Endothelial cell of umbilical vein (primary cell): ENCODE measurements at regions of chr1 and their contacts with region 1.

Region 1: GRCh38 chr1:98794196-98794886 is 132.8 kb downstream of the SNX7 start:
- DNase-seq: peak; percentile 80
- H3K4me3 ChIP-seq: no peak overlapping the region
- H3K27ac ChIP-seq: no peak overlapping the region
- H3K4me1 ChIP-seq: no peaks in the 10 kb centered on the region
- H3K27me3 ChIP-seq: peaks cover 13 to 18% of the 10 kb centered on the region in 2 experiments
- CTCF ChIP-seq: peak; percentile 62 to 69
- POLR2A ChIP-seq: no peak

Region 2: DNA sequence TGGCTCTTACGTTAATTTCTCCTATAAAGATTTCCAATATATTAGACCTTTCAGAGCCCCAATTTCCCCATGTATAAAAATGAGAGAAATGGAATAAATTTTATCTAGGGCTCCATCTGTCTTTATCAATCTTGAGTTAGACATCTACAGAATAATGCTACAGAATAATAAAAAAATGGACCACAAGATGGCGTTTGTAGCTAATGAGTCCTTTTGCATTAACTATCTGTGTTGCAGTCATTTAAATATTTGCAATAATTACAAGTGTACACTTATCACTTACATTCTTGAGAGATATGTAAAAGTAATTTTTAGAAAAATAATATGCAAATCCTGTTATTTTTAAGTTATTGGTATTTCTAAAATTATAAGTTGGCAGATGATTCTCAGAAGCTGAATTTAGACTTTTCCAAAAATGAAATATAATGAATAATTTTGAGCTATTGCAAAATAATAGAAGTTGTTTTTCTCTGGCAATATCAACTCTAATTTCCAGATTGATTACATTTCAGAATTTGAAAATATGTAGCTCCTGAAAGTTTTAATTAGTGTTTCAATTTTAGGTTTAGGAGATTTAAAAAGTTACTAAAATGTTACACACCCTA is 45.1 kb before region 1 on chr1:
- CTCF ChIA-PET with region 1: interaction called, 10 read pairs
- POLR2A ChIA-PET with region 1: no interaction called
- dilution Hi-C with region 1: no loop called
- intact Hi-C with region 1: no loop called
- DNase-seq: peak; percentile 32
- H3K4me3 ChIP-seq: no peak overlapping the region
- H3K27ac ChIP-seq: no peak overlapping the region
- H3K4me1 ChIP-seq: no peaks in the 10 kb centered on the region
- H3K27me3 ChIP-seq: no peaks in the 10 kb centered on the region
- CTCF ChIP-seq: peak; percentile 10 to 22
- POLR2A ChIP-seq: no peak

Region 3: GRCh38 chr1:98761219-98761865 is 33.0 kb before region 1 on chr1:
- CTCF ChIA-PET with region 1: interaction called, 10 read pairs
- POLR2A ChIA-PET with region 1: no interaction called
- dilution Hi-C with region 1: no loop called
- intact Hi-C with region 1: no loop called
- DNase-seq: no peak
- H3K4me3 ChIP-seq: no peak overlapping the region
- H3K27ac ChIP-seq: no peak overlapping the region
- H3K4me1 ChIP-seq: no peaks in the 10 kb centered on the region
- H3K27me3 ChIP-seq: no peaks in the 10 kb centered on the region
- CTCF ChIP-seq: no peak
- POLR2A ChIP-seq: no peak

Region 4: GRCh38 chr1:99004860-99005442 is 210.6 kb after region 1 on chr1 and contains the start of gene PLPPR5:
- CTCF ChIA-PET with region 1: interaction called, 4 read pairs
- POLR2A ChIA-PET with region 1: no interaction called
- dilution Hi-C with region 1: no loop called
- intact Hi-C with region 1: loop called (anchors 1 kb)
- DNase-seq: peak; percentile 12
- H3K4me3 ChIP-seq: peak within 1 kb of the TSS; percentile 4 to 40 (median 5)
- H3K27ac ChIP-seq: no peak within 1 kb of the TSS
- H3K4me1 ChIP-seq: peaks cover 6% of the 10 kb centered on the region
- H3K27me3 ChIP-seq: peaks cover 43 to 79% of the 10 kb centered on the region in 2 experiments
- CTCF ChIP-seq: peak in 1 of 2 donors; percentile 31
- POLR2A ChIP-seq: no peak
- total RNA-seq, gene PLPPR5: not detected in 2 replicates

Region 5: GRCh38 chr1:99180343-99180808 is 386.0 kb after region 1 on chr1:
- CTCF ChIA-PET with region 1: interaction called, 14 read pairs
- POLR2A ChIA-PET with region 1: no interaction called
- dilution Hi-C with region 1: no loop called
- intact Hi-C with region 1: loop called (anchors 1 kb)
- DNase-seq: peak; percentile 90
- H3K4me3 ChIP-seq: no peak overlapping the region
- H3K27ac ChIP-seq: no peak overlapping the region
- H3K4me1 ChIP-seq: no peaks in the 10 kb centered on the region
- H3K27me3 ChIP-seq: no peaks in the 10 kb centered on the region
- CTCF ChIP-seq: peak; percentile 57 to 68
- POLR2A ChIP-seq: no peak

Region 6: DNA sequence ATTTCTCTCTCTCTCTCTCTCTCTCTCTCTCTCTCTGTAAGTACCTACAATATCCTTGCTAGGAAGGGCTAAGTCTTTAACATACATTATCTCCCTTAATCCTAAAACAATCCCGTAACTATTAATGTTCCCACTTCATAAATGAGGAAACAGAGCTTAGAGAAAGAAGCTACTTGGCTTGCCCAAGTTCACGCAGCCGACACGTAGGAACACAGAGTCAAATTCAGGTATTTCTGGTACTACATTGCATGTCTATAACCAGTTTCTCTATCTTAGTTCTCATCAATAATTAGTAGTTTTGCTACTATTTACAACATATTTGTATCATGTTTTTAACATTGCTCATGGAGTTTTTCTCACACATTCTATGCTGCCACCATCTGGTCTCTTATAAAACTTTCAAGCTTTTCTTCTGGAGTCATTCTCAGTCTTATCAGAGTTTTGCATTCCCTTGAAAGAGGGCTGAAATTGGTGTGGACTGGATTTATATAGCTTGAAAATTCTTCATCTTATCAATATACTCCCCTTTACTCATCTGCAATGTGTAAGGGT is 732.7 kb after region 1 on chr1:
- CTCF ChIA-PET with region 1: interaction called, 14 read pairs
- POLR2A ChIA-PET with region 1: no interaction called
- dilution Hi-C with region 1: no loop called
- intact Hi-C with region 1: no loop called
- DNase-seq: peak; percentile 57
- H3K4me3 ChIP-seq: no peak overlapping the region
- H3K27ac ChIP-seq: no peak overlapping the region
- H3K4me1 ChIP-seq: no peaks in the 10 kb centered on the region
- H3K27me3 ChIP-seq: no peaks in the 10 kb centered on the region
- CTCF ChIP-seq: peak in 1 of 2 donors; percentile 21
- POLR2A ChIP-seq: no peak

Region 7: GRCh38 chr1:99737016-99737415 is 942.7 kb after region 1 on chr1:
- CTCF ChIA-PET with region 1: interaction called, 12 read pairs
- POLR2A ChIA-PET with region 1: no interaction called
- dilution Hi-C with region 1: no loop called
- intact Hi-C with region 1: loop called (anchors 1 kb)
- DNase-seq: peak; percentile 84
- H3K4me3 ChIP-seq: no peak overlapping the region
- H3K27ac ChIP-seq: no peak overlapping the region
- H3K4me1 ChIP-seq: no peaks in the 10 kb centered on the region
- H3K27me3 ChIP-seq: no peaks in the 10 kb centered on the region
- CTCF ChIP-seq: peak; percentile 40 to 50
- POLR2A ChIP-seq: no peak